IMR-90 (cell line): ENCODE measurements at regions of chr21 and their contacts with region 1.

Region 1: GRCh38 chr21:36504067-36505058 is 24.4 kb upstream of the CLDN14 start:
- DNase-seq: peak; percentile 68
- ATAC-seq: peak; percentile 52; the same call in 1 of the 2 replicates
- H3K4me3 ChIP-seq: no peak overlapping the region
- H3K27ac ChIP-seq: no peak overlapping the region
- H3K4me1 ChIP-seq: no peaks in the 10 kb centered on the region
- H3K27me3 ChIP-seq: peaks cover 4% of the 10 kb centered on the region
- CTCF ChIP-seq: peak; percentile 90
- POLR2A ChIP-seq: no peak
- RAD21 ChIP-seq: peak; percentile 90

Region 2: GRCh38 chr21:35738347-35738961 is 765.9 kb before region 1 on chr21:
- CTCF ChIA-PET with region 1: no interaction called
- POLR2A ChIA-PET with region 1: no interaction called
- dilution Hi-C with region 1: no loop called
- in situ Hi-C with region 1: no loop called
- intact Hi-C with region 1: no loop called
- DNase-seq: peak; percentile 4
- ATAC-seq: no peak
- H3K4me3 ChIP-seq: no peak overlapping the region
- H3K27ac ChIP-seq: no peak overlapping the region
- H3K4me1 ChIP-seq: peaks cover 2% of the 10 kb centered on the region; the same call in 1 of the 2 replicates
- H3K27me3 ChIP-seq: no peaks in the 10 kb centered on the region; the same call in 1 of the 2 replicates
- CTCF ChIP-seq: no peak
- POLR2A ChIP-seq: no peak
- RAD21 ChIP-seq: no peak

Region 3: DNA sequence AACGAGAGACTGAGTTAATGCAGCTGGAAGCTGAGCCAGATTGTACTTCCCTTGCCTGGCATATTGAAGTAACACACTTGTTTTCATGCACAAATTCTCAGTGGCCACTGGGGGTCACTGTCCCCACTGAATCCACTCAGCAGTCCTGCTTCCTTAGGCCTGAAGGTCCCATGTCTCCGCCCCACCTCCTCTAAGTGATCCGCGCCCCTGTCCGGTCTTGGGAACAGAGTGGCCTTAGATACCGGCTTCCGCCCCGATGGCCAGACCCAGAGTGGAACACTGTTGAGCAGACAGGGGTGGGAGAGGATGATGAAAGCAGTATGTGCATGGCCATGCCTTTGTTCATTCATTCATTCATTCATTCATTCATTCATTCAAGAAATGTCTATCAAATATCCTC is 84.4 kb before region 1 on chr21:
- CTCF ChIA-PET with region 1: no interaction called
- POLR2A ChIA-PET with region 1: no interaction called
- dilution Hi-C with region 1: no loop called
- in situ Hi-C with region 1: no loop called
- intact Hi-C with region 1: loop called (anchors 2 kb)
- DNase-seq: peak; percentile 92
- ATAC-seq: peak; percentile 98
- H3K4me3 ChIP-seq: no peak overlapping the region
- H3K27ac ChIP-seq: no peak overlapping the region
- H3K4me1 ChIP-seq: no peaks in the 10 kb centered on the region
- H3K27me3 ChIP-seq: no peaks in the 10 kb centered on the region
- CTCF ChIP-seq: peak; percentile 93
- POLR2A ChIP-seq: no peak
- RAD21 ChIP-seq: peak; percentile 97

Region 4: DNA sequence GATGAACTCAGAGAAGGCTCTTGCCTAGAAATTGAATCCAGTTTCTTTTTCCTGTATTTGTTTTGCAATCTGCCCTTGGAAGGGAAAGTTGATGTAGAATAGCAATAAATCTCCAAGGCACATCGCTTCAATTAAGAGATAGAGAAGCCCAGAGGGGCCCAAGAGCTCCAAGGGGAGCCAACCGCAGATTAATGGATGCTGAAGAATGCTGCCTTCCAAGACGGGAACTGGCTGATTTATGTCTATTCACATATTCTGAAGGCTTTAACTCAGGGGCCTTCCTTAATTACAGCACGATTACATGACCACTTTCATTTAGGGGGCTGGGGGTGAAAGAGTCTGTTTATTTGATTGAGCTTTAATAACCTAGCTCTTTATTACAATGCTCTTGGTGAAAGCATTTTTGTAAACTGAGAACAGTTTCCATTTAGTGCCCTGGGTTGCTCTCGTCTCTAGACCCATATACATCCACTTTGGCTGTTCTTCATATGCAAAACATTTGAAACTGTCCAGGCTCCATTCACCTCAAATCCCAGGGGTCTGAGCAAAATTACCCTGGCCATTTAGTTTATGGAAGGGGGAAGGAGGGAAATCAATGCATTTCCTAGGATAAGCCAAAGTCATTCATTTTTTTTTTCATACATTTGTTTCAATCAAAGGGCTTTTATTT is 63.0 kb after region 1 on chr21:
- CTCF ChIA-PET with region 1: no interaction called
- POLR2A ChIA-PET with region 1: no interaction called
- dilution Hi-C with region 1: no loop called
- in situ Hi-C with region 1: no loop called
- intact Hi-C with region 1: no loop called
- DNase-seq: no peak
- ATAC-seq: no peak
- H3K4me3 ChIP-seq: no peak overlapping the region
- H3K27ac ChIP-seq: no peak overlapping the region
- H3K4me1 ChIP-seq: no peaks in the 10 kb centered on the region
- H3K27me3 ChIP-seq: peaks cover 63% of the 10 kb centered on the region
- CTCF ChIP-seq: no peak
- POLR2A ChIP-seq: no peak
- RAD21 ChIP-seq: no peak

Region 5: GRCh38 chr21:36747815-36748383 is 243.5 kb after region 1 on chr21:
- CTCF ChIA-PET with region 1: no interaction called
- POLR2A ChIA-PET with region 1: no interaction called
- dilution Hi-C with region 1: no loop called
- in situ Hi-C with region 1: no loop called
- intact Hi-C with region 1: loop called (anchors 10 kb)
- DNase-seq: peak; percentile 34
- ATAC-seq: peak; percentile 96
- H3K4me3 ChIP-seq: peak overlapping the region; percentile 55
- H3K27ac ChIP-seq: no peak overlapping the region; the same call in 1 of the 2 replicates
- H3K4me1 ChIP-seq: peaks cover 11% of the 10 kb centered on the region
- H3K27me3 ChIP-seq: peaks cover 2% of the 10 kb centered on the region
- CTCF ChIP-seq: peak; percentile 56
- POLR2A ChIP-seq: no peak
- RAD21 ChIP-seq: peak; percentile 55

Region 6: GRCh38 chr21:36927719-36928117 is 423.4 kb after region 1 on chr21:
- CTCF ChIA-PET with region 1: interaction called, 3 read pairs
- POLR2A ChIA-PET with region 1: no interaction called
- dilution Hi-C with region 1: no loop called
- in situ Hi-C with region 1: loop called (anchors 5 kb)
- intact Hi-C with region 1: loop called (anchors 1 kb)
- DNase-seq: peak; percentile 97
- ATAC-seq: peak; percentile 96
- H3K4me3 ChIP-seq: no peak overlapping the region
- H3K27ac ChIP-seq: no peak overlapping the region; the same call in 1 of the 2 replicates
- H3K4me1 ChIP-seq: peaks cover 10% of the 10 kb centered on the region
- H3K27me3 ChIP-seq: no peaks in the 10 kb centered on the region
- CTCF ChIP-seq: peak; percentile 97
- POLR2A ChIP-seq: no peak
- RAD21 ChIP-seq: peak; percentile 95

Region 7: GRCh38 chr21:36989699-36990507 is 485.5 kb after region 1 on chr21:
- CTCF ChIA-PET with region 1: no interaction called
- POLR2A ChIA-PET with region 1: no interaction called
- dilution Hi-C with region 1: no loop called
- in situ Hi-C with region 1: no loop called
- intact Hi-C with region 1: loop called (anchors 1 kb)
- DNase-seq: peak; percentile 90
- ATAC-seq: peak; percentile 98
- H3K4me3 ChIP-seq: peak overlapping the region; percentile 44
- H3K27ac ChIP-seq: peak overlapping the region; percentile 80
- H3K4me1 ChIP-seq: peaks cover 6% of the 10 kb centered on the region; the same call in 1 of the 2 replicates
- H3K27me3 ChIP-seq: no peaks in the 10 kb centered on the region; the same call in 1 of the 2 replicates
- CTCF ChIP-seq: peak; percentile 78
- POLR2A ChIP-seq: no peak
- RAD21 ChIP-seq: peak; percentile 44

Region 8: DNA sequence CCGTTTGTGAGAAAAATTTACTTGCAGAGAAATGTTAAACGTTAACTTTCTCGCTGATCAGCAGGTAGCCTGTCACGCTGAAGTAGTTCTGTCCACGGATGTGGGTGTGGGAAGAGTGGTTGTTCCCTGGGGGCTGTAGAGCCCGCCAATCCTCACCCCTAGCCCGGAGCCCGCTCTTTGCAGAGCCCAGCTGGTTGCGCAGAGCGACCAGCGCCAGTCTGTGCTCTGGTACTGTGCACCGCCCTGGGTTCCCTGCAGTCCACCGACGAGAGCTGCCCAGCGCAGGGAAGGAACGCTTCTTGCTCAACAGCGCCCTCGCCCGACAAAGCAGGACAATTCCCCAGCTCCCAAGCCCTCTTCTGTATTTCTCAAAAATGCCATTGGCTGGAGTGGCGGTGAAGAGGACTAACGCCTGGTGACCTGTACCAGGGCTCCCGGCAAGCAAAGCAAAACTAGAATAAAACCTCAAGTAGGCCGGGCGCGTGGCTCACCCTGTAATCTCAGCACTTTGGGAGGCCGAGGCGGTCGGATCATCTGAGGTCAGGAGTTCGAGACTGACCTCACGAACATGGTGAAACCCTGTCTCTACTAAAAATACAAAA is 505.5 kb after region 1 on chr21:
- CTCF ChIA-PET with region 1: no interaction called
- POLR2A ChIA-PET with region 1: no interaction called
- dilution Hi-C with region 1: no loop called
- in situ Hi-C with region 1: no loop called
- intact Hi-C with region 1: loop called (anchors 5 kb)
- DNase-seq: peak; percentile 80
- ATAC-seq: peak; percentile 99
- H3K4me3 ChIP-seq: peak overlapping the region; percentile 39
- H3K27ac ChIP-seq: no peak overlapping the region
- H3K4me1 ChIP-seq: no peaks in the 10 kb centered on the region
- H3K27me3 ChIP-seq: peaks cover 30% of the 10 kb centered on the region
- CTCF ChIP-seq: peak; percentile 89
- POLR2A ChIP-seq: no peak
- RAD21 ChIP-seq: peak; percentile 74

Region 9: GRCh38 chr21:37087188-37087587 is 582.8 kb after region 1 on chr21:
- CTCF ChIA-PET with region 1: no interaction called
- POLR2A ChIA-PET with region 1: no interaction called
- dilution Hi-C with region 1: no loop called
- in situ Hi-C with region 1: no loop called
- intact Hi-C with region 1: loop called (anchors 10 kb)
- DNase-seq: peak; percentile 82
- ATAC-seq: peak; percentile 79
- H3K4me3 ChIP-seq: no peak overlapping the region
- H3K27ac ChIP-seq: no peak overlapping the region
- H3K4me1 ChIP-seq: peaks cover 4% of the 10 kb centered on the region; the same call in 1 of the 2 replicates
- H3K27me3 ChIP-seq: no peaks in the 10 kb centered on the region
- CTCF ChIP-seq: peak; percentile 68
- POLR2A ChIP-seq: no peak
- RAD21 ChIP-seq: peak; percentile 72